IMR-90 (cell line): ENCODE measurements at regions of chr7 and their contacts with region 1.

Region 1: GRCh38 chr7:100719523-100720319 is 547 bp upstream of the EPO start:
- DNase-seq: peak; percentile 51
- ATAC-seq: peak; percentile 79
- H3K4me3 ChIP-seq: no peak overlapping the region
- H3K27ac ChIP-seq: no peak overlapping the region
- H3K4me1 ChIP-seq: no peaks in the 10 kb centered on the region
- H3K27me3 ChIP-seq: peaks cover 56% of the 10 kb centered on the region
- CTCF ChIP-seq: peak; percentile 51
- POLR2A ChIP-seq: no peak
- RAD21 ChIP-seq: peak; percentile 59

Region 2: DNA sequence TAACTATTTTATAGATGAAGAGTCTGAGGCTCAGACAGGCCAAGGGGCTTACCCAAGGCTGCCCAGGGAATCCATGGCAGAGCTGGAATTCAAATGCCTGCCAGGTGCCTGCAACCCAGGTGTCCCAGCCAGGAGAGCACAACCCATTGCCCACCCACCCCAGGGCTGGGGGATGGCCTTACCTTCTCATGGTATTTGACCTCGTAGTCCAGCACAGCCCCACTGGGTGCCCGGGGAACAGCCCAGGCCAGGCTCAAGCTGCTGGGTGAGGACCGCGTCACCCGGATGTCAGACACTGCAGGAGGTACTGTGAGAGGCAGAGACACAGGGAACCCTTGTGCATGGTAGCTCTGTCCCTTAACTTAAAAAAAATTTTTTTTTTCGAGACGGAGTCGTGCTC is 98.6 kb after region 1 on chr7:
- CTCF ChIA-PET with region 1: no interaction called
- POLR2A ChIA-PET with region 1: interaction called, 19 read pairs
- dilution Hi-C with region 1: no loop called
- in situ Hi-C with region 1: no loop called
- intact Hi-C with region 1: no loop called
- DNase-seq: no peak
- ATAC-seq: no peak
- H3K4me3 ChIP-seq: no peak overlapping the region
- H3K27ac ChIP-seq: no peak overlapping the region
- H3K4me1 ChIP-seq: peaks cover 3% of the 10 kb centered on the region; the same call in 1 of the 2 replicates
- H3K27me3 ChIP-seq: no peaks in the 10 kb centered on the region
- CTCF ChIP-seq: no peak
- POLR2A ChIP-seq: no peak
- RAD21 ChIP-seq: no peak